Caco-2 (cell line): ENCODE measurements at regions of chr18 and their contacts with region 1.

Region 1: DNA sequence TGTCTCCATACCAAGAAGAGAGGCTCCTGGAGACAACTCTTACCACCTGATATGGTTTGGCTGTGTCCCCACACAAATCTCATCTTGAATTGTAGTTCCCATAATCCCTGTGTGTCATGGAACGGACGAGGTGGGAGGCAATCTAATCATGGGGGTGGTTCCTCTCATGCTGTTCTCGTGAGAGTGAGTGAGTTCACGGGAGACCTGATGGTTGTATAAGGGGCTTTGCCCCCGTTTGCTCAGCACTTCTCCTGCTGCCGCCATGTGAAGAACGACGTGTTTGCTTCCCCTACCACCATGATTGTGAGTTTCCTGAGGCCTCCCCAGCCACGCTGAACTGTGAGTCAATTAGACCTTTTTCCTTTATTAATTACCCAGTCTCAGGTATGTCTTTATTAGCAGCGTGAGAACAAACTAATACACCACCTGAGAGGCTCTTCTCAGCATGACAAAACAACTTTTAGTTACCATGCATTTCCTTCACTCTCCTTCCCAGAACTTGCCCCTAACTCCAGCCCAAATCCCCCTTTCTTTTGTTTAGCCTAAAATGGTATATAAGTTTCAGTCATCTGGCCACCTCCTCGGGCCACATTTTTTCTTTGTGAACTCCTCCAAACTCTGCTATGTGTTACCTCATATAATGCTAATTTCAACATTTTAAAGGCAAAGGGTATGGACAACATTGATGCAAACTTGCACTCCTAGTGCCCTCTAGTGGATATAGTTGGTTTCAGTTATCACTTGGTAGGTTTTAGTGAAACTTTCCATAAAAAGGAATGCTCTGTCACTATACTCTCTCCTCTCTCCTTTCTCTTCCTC is 58.6 kb upstream of the SLC25A52 start:
- DNase-seq: peak in 1 of 2 experiments; percentile 56
- H3K4me3 ChIP-seq: no peak overlapping the region
- H3K4me3 Mint-ChIP-seq: peak overlapping the region; percentile 12
- H3K27ac Mint-ChIP-seq: peak overlapping the region; percentile 54
- H3K4me1 ChIP-seq: peaks cover 12% of the 10 kb centered on the region; the same call in 1 of the 2 replicates
- H3K4me1 Mint-ChIP-seq: peaks cover 7% of the 10 kb centered on the region
- H3K27me3 ChIP-seq: no peaks in the 10 kb centered on the region
- H3K27me3 Mint-ChIP-seq: no peaks in the 10 kb centered on the region
- CTCF ChIP-seq: peak; percentile 32 to 51

Region 2: GRCh38 chr18:31710826-31711225 is 108.5 kb before region 1 on chr18:
- CTCF ChIA-PET with region 1: no interaction called
- POLR2A ChIA-PET with region 1: no interaction called
- intact Hi-C with region 1: loop called (anchors 1 kb)
- DNase-seq: peak in 1 of 2 experiments; percentile 7
- H3K4me3 ChIP-seq: no peak overlapping the region
- H3K4me3 Mint-ChIP-seq: no peak overlapping the region
- H3K27ac Mint-ChIP-seq: peak overlapping the region; percentile 78
- H3K4me1 ChIP-seq: no peaks in the 10 kb centered on the region
- H3K4me1 Mint-ChIP-seq: no peaks in the 10 kb centered on the region
- H3K27me3 ChIP-seq: no peaks in the 10 kb centered on the region
- H3K27me3 Mint-ChIP-seq: no peaks in the 10 kb centered on the region
- CTCF ChIP-seq: peak in 1 of 2 experiments; percentile 1

Region 3: GRCh38 chr18:31741097-31741735 is 78.1 kb before region 1 on chr18:
- CTCF ChIA-PET with region 1: no interaction called
- POLR2A ChIA-PET with region 1: no interaction called
- intact Hi-C with region 1: loop called (anchors 1 kb)
- DNase-seq: peak in 1 of 2 experiments; percentile 17
- H3K4me3 ChIP-seq: no peak overlapping the region
- H3K4me3 Mint-ChIP-seq: no peak overlapping the region
- H3K27ac Mint-ChIP-seq: no peak overlapping the region
- H3K4me1 ChIP-seq: no peaks in the 10 kb centered on the region
- H3K4me1 Mint-ChIP-seq: no peaks in the 10 kb centered on the region
- H3K27me3 ChIP-seq: no peaks in the 10 kb centered on the region
- H3K27me3 Mint-ChIP-seq: no peaks in the 10 kb centered on the region
- CTCF ChIP-seq: peak; percentile 47 to 60

Region 4: GRCh38 chr18:31857526-31858106 is 38.3 kb after region 1 on chr18:
- CTCF ChIA-PET with region 1: no interaction called
- POLR2A ChIA-PET with region 1: no interaction called
- intact Hi-C with region 1: no loop called
- DNase-seq: no peak
- H3K4me3 ChIP-seq: no peak overlapping the region
- H3K4me3 Mint-ChIP-seq: no peak overlapping the region
- H3K27ac Mint-ChIP-seq: no peak overlapping the region
- H3K4me1 ChIP-seq: no peaks in the 10 kb centered on the region
- H3K4me1 Mint-ChIP-seq: no peaks in the 10 kb centered on the region
- H3K27me3 ChIP-seq: no peaks in the 10 kb centered on the region
- H3K27me3 Mint-ChIP-seq: no peaks in the 10 kb centered on the region
- CTCF ChIP-seq: no peak

Region 5: DNA sequence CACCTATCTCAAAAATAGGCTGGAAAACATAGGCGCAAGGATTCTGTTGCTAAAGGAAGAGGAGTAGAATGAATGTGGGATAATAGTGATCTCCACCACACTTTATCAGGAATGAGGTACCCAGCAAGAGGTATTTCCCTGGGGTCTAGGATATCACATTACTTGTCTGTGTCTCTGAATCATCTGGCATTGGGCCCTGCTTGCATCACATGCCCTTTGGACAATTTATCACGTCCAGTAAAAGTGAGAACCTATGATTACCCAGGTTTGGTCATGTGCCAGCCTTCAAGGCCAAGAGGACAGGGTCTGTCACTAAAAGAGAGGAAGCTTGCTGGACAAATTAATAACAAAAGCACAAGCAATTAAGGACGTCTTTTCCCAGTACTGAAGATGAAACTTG is 135.0 kb after region 1 on chr18:
- CTCF ChIA-PET with region 1: no interaction called
- POLR2A ChIA-PET with region 1: no interaction called
- intact Hi-C with region 1: loop called (anchors 10 kb)
- DNase-seq: no peak
- H3K4me3 ChIP-seq: no peak overlapping the region
- H3K4me3 Mint-ChIP-seq: no peak overlapping the region
- H3K27ac Mint-ChIP-seq: no peak overlapping the region
- H3K4me1 ChIP-seq: no peaks in the 10 kb centered on the region
- H3K4me1 Mint-ChIP-seq: peaks cover 8% of the 10 kb centered on the region
- H3K27me3 ChIP-seq: no peaks in the 10 kb centered on the region
- H3K27me3 Mint-ChIP-seq: no peaks in the 10 kb centered on the region
- CTCF ChIP-seq: no peak